Activated CD8-positive, alpha-beta T cell treated with anti-CD3 and anti-CD28 coated beads, Interleukin-2, amount 10 ng/mL, durations not matched to agents 7 days and 5 days (primary cell): ENCODE measurements at regions of chr11 and their contacts with region 1.

Region 1: GRCh38 chr11:6481012-6481923 is at the starts of genes ARFIP2 and TIMM10B:
- DNase-seq: peak; percentile 99
- ATAC-seq: peak; percentile 96
- H3K4me3 Mint-ChIP-seq: peak within 1 kb of the TSS; percentile 94
- H3K27ac Mint-ChIP-seq: peak within 1 kb of the TSS; percentile 97
- H3K4me1 Mint-ChIP-seq: peaks cover 38% of the 10 kb centered on the region
- H3K27me3 Mint-ChIP-seq: no peaks in the 10 kb centered on the region
- total RNA-seq, gene ARFIP2: 38.6 to 39.8 TPM
- total RNA-seq, gene TIMM10B: 34.1 to 35.4 TPM

Region 2: GRCh38 chr11:6497069-6497839 is 16.0 kb after region 1 on chr11 and contains the start of gene DNHD1:
- CTCF ChIA-PET with region 1: interaction called, 9 read pairs
- POLR2A ChIA-PET with region 1: interaction called, 14 read pairs
- DNase-seq: no peak
- ATAC-seq: no peak
- H3K4me3 Mint-ChIP-seq: no peak within 1 kb of the TSS
- H3K27ac Mint-ChIP-seq: no peak within 1 kb of the TSS
- H3K4me1 Mint-ChIP-seq: peaks cover 13% of the 10 kb centered on the region
- H3K27me3 Mint-ChIP-seq: no peaks in the 10 kb centered on the region
- total RNA-seq, gene DNHD1: 17.8 to 18.5 TPM